Uterus (tissue), 4 donors: ENCODE measurements at regions of chr13 and their contacts with region 1.

Region 1: GRCh38 chr13:100514788-100515409 is 73.7 kb downstream of the GGACT start:
- DNase-seq: peak; percentile 82 to 83
- H3K4me3 ChIP-seq: no peak overlapping the region
- H3K27ac ChIP-seq: peak overlapping the region in 1 of 2 donors; percentile 26
- H3K4me1 ChIP-seq: no peaks in the 10 kb centered on the region
- H3K27me3 ChIP-seq: no peaks in the 10 kb centered on the region
- CTCF ChIP-seq: peak; percentile 86 to 93 (median 86)
- POLR2A ChIP-seq: no peak

Region 2: DNA sequence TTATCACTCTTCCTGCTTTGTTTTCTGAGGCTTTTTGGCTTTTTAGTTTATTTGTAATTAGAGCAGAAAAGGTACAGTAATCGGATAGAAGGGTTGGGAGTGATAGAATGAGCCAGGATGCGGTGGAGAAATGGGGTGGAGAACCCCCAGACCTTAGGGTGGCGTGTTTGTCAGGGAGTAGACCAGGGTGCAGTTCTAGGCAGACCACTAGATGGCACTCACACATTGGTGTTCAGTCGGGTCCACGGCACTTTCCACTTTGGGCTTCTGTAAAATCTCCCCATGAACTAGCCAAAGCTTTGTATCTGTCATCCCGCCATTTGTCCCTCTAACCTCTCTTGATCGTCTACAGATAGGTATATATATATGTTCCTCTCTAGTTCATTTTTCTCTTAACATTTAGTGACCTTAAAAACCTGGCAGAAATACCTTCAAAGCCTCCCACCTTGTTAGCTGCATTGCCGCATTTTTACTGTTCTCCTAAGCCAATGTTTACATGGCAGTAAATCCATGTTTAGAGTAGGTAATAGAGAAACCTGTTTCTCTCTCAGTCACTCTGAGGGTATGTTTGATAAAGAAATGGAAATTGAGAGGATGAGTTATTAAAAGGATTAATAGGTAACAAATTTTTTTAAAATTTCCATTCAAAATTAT is 858.7 kb before region 1 on chr13:
- intact Hi-C with region 1: loop called (anchors 10 kb)
- DNase-seq: peak; percentile 75 to 82
- H3K4me3 ChIP-seq: no peak overlapping the region
- H3K27ac ChIP-seq: no peak overlapping the region
- H3K4me1 ChIP-seq: no peaks in the 10 kb centered on the region
- H3K27me3 ChIP-seq: no peaks in the 10 kb centered on the region
- CTCF ChIP-seq: peak; percentile 76 to 91 (median 85)
- POLR2A ChIP-seq: no peak

Region 3: DNA sequence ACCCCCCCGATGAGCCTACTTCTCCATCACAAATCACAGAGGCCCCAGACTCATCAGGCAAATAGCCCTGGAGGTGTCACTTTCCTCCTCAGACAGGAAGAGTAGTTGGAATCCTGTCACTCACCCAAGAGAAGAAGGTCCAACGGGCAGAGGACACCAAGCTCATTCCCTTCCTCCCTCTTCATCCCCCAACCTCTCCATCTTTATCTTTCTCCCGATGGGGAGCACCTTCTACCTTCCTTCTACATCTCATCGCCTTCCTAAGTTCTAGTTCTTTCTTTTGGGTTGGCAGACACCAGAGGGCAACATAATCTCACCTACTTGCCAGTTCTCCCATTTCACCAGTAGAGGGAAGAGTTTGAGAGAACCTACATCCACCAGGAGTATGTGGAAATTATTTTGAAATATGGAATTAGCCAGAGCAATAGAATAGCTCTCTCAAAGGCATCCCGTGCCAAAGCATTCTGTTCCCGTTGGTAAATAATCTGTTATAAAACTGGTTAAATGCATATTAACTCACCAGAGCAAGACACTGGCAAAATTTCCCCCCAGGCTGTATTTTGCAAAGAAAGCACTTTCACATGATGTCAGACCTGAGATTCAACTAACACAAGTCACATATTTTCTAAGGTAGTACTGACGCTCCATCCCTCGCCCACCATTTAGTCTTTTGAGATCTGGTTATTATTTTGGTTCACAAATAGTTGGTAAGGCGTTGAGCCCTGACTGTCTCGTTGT is 598.4 kb before region 1 on chr13:
- intact Hi-C with region 1: loop called (anchors 10 kb)
- DNase-seq: no peak
- H3K4me3 ChIP-seq: no peak overlapping the region
- H3K27ac ChIP-seq: no peak overlapping the region
- H3K4me1 ChIP-seq: no peaks in the 10 kb centered on the region
- H3K27me3 ChIP-seq: no peaks in the 10 kb centered on the region
- CTCF ChIP-seq: peak; percentile 59 to 87 (median 67)
- POLR2A ChIP-seq: no peak